Activated CD4-positive, alpha-beta memory T cell treated with anti-CD3 and anti-CD28 coated beads, Interleukin-2, amount 10 ng/mL, durations not matched to agents 7 days and 5 days (primary cell): ENCODE measurements at regions of chr17 and their contacts with region 1.

Region 1: DNA sequence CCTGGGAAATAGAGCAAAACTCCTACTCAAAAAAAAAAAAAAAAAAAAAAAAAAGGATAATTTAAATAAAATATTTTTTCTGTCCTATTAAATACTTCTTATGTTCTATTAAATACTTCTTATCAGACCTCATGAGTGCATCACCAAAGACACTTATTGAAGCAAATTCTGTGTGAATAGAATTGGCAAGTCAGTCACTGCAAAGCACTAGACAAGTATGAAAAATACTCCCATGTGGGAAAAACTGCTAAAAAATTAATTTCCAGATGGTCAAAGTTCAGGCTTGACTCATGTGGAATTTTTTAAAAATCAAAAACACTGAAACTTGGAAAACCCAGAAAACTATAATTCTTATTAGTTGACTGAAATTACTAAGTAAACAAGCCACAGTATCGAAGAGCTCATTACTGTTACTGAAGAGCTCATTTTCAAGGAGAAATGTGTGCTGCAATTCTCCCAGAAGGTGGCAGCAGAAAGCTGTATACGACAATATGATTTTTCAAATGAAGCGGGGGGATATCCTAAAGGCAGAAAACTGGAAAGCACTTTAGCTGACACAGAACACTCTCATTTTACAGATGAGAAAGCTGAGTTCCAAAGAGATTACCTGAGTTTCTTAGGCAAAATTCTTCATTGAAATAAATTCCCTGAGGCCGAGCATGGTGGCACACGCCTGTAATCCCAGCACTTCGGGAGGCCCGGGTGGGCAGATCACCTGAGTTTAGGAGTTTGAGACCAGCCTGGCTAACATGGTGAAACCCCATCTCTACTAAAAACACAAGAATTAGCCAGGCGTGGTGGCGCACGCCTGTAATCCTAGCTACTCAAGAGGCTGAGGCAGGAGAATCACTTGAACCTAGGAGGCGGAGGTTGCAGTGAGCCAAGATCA is 15.9 kb upstream of the FBXO47 start:
- DNase-seq: peak; percentile 40
- H3K4me3 Mint-ChIP-seq: no peak overlapping the region
- H3K27ac Mint-ChIP-seq: no peak overlapping the region
- H3K4me1 Mint-ChIP-seq: peaks cover 2% of the 10 kb centered on the region
- H3K27me3 Mint-ChIP-seq: peaks cover 4% of the 10 kb centered on the region

Region 2: DNA sequence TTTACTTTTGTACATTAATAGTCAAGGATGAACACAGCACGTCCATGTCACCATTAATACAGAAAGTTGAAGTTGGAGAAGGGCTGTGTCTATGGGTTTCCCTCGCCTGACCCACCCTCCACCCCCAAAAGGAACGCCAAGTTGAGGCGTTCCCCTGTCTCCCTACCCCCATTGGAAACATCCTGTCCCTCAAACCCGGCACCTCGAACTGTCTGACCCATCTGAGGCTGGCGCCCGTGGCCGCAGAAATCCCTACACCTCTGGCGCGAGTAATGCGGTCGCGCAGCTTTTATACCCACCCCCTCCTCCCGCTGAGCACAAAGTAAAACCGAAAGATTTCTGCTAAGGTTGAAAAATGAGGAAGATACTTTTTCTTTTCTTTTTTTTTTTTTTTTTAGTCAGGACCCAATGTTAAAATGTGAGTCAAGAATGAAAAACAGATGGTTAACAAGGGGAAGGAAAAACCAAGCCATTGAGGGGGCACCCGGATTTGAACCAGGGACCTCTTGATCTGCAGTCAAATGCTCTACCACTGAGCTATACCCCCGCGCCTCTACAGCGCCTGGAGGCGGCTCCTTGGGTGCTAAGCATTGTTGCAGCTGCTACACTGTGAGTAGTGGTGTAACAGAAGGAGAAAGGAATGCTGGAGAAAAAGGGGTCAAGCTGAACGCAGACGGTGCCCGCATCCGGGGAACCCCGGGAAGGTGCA is 114.1 kb before region 1 on chr17:
- CTCF ChIA-PET with region 1: interaction called, 13 read pairs
- POLR2A ChIA-PET with region 1: interaction called, 3 read pairs
- DNase-seq: peak; percentile 90
- H3K4me3 Mint-ChIP-seq: peak overlapping the region; percentile 98
- H3K27ac Mint-ChIP-seq: peak overlapping the region; percentile 98
- H3K4me1 Mint-ChIP-seq: peaks cover 45% of the 10 kb centered on the region
- H3K27me3 Mint-ChIP-seq: no peaks in the 10 kb centered on the region

Region 3: GRCh38 chr17:38994026-38994425 is 10.9 kb after region 1 on chr17:
- CTCF ChIA-PET with region 1: interaction called, 14 read pairs
- POLR2A ChIA-PET with region 1: no interaction called
- DNase-seq: no peak
- H3K4me3 Mint-ChIP-seq: no peak overlapping the region
- H3K27ac Mint-ChIP-seq: no peak overlapping the region
- H3K4me1 Mint-ChIP-seq: no peaks in the 10 kb centered on the region
- H3K27me3 Mint-ChIP-seq: peaks cover 3% of the 10 kb centered on the region

Region 4: DNA sequence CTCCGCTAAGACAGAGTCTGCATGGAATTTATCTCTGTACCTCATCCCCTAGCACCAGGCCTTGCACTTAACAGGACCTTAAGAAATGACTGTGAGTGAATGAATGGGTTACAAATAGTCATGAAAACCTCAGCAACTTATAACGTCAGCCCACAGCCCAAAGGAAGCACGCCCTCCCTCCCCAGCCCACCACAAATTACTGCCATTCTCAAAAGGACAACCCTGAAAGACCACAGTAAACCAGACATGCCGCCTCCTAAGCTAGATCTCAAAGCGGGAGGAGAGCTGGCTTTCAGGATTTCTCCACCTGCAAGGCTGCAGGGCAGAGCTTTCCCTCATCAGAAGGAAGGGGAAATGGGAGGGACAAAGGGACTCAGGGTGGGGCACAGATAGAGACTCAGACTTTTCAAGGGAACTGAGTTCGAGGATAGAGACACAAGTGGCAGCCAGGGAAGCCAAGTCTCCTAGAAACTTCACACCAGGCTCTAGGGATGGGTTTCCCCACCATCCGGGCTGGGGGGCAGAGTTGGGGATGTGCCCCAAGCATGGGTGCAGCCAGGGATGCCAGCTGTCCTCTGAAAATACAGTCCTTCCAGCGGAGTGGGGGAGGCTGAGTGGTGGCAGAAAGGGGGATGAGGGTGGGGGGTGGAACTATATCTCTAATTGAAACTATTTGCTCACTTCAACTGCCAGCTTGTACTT is 111.7 kb after region 1 on chr17:
- CTCF ChIA-PET with region 1: interaction called, 10 read pairs
- POLR2A ChIA-PET with region 1: no interaction called
- DNase-seq: peak; percentile 73
- H3K4me3 Mint-ChIP-seq: peak overlapping the region; percentile 69
- H3K27ac Mint-ChIP-seq: peak overlapping the region; percentile 88
- H3K4me1 Mint-ChIP-seq: peaks cover 68% of the 10 kb centered on the region
- H3K27me3 Mint-ChIP-seq: no peaks in the 10 kb centered on the region

Region 5: GRCh38 chr17:39164675-39165143 is 181.6 kb after region 1 on chr17:
- CTCF ChIA-PET with region 1: interaction called, 52 read pairs
- POLR2A ChIA-PET with region 1: interaction called, 3 read pairs
- DNase-seq: peak; percentile 77
- H3K4me3 Mint-ChIP-seq: peak overlapping the region; percentile 76
- H3K27ac Mint-ChIP-seq: no peak overlapping the region
- H3K4me1 Mint-ChIP-seq: peaks cover 32% of the 10 kb centered on the region
- H3K27me3 Mint-ChIP-seq: peaks cover 36% of the 10 kb centered on the region

Region 6: DNA sequence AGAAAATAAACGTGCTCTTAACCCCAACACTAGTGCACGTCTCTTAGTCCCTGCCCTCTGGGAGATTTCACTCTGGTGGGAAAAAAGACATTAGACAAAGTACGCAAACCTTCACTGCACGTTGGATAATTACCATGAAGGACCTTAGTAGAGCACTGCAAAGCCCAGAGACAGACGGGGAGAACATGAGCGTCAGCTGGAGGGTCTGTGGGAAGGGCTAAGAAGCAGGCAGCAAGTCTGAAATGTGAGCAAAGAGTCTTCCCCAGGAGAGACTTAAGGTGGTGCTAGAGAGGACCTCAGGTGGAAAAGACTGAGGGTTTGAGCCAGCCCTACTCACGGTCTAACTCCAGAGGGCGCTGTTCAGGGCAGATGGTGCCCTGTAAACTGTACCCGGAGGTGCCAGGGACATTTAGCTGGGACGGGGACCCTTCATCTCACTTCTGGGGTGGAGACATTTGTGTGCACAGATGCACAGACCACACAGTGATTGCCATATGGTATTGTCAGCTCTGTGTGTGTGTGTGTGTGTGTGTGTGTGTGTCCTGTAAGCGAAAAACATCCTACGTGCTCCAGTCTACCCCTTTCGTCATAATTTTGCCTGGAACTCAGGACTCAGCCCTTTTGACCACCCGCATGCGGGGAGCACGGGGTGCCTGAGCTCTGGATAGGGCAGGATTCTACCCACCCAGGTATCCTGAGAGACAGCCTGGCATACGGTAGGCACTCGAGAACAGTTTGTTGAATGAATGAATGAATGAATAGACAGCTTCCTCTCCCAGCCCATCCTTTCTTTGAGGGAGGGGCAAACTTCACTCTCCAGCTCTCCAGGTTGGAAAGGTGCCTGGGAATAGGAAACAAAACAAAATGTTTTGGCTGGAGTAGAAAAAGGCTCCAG is 252.7 kb after region 1 on chr17:
- CTCF ChIA-PET with region 1: interaction called, 12 read pairs
- POLR2A ChIA-PET with region 1: interaction called, 3 read pairs
- DNase-seq: peak; percentile 72
- H3K4me3 Mint-ChIP-seq: no peak overlapping the region
- H3K27ac Mint-ChIP-seq: no peak overlapping the region
- H3K4me1 Mint-ChIP-seq: peaks cover 28% of the 10 kb centered on the region
- H3K27me3 Mint-ChIP-seq: peaks cover 9% of the 10 kb centered on the region